Activated T-helper 2 cell treated with anti-CD3 and anti-CD28 coated beads, Interferon-gamma antibody, Interleukin-2, Interleukin-4, amounts not matched to agents 10 μg/mL and 5 μg/mL and 100 μg/mL, durations not matched to agents 14 hours and 24 hours and 36 hours (primary cell): ENCODE measurements at regions of chr12 and their contacts with region 1.

Region 1: DNA sequence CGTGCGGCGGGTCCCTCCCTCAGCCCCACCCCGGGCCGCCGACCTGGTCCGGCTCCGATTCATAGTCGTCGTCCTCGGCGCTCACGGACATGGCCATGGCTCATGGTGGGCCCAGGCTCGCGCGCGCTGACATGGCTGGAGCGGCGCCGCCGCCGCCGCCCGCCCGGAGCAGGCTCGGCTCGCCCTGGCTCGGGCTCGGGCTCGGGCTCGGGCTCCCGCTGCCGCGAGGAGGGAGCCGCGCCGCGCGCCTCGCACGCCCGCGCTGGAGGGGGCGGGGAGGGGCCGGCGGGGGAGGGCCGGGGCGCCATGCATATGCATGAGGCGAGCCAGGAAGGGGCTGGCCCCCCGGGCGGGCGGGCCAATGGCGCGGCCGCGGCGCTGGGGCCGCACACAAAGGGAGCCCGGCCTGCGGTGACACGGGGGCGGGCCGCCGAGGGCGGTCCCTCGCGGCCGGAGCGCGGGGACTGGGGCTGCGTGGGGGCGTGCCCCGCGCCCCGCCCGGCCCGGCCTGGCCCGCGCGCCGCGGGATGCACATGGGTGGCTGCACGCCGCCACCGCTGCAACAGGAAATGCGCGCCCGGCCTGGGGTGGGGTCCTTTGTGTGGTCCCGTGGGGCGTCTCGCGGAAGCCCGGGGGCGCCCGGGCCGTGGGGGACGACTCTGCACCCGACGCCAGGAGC is 67.3 kb downstream of the RNF34 start:
- DNase-seq: peak; percentile 87
- H3K4me3 Mint-ChIP-seq: peak overlapping the region; percentile 17
- H3K27ac Mint-ChIP-seq: no peak overlapping the region
- H3K4me1 Mint-ChIP-seq: peaks cover 17% of the 10 kb centered on the region
- H3K27me3 Mint-ChIP-seq: no peaks in the 10 kb centered on the region

Region 2: DNA sequence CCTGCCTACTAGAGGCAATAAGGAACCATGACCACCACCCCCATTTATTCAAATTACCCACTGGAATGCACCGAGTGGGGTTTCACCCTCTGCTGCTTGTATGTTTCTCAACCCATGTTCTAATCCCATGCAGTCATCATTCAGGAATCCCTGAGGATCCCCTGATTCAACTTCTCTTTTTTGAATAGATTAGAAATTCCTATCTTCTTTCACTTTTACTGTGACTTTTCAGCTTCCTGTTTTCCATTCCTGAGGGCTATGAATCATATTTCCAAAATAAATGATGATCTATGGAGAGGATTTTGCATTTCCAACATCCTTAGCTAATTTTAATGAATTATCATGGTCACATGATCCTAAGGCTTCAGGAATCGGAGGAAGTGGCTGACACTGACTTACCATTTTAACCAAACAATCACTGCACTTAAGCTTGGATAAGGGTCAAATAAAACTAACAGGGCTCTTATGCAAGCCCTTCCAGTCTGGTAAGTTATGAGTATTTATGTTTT is 276.7 kb before region 1 on chr12:
- intact Hi-C with region 1: no loop called
- DNase-seq: no peak
- H3K4me3 Mint-ChIP-seq: no peak overlapping the region
- H3K27ac Mint-ChIP-seq: no peak overlapping the region
- H3K4me1 Mint-ChIP-seq: peaks cover 9% of the 10 kb centered on the region
- H3K27me3 Mint-ChIP-seq: no peaks in the 10 kb centered on the region

Region 3: DNA sequence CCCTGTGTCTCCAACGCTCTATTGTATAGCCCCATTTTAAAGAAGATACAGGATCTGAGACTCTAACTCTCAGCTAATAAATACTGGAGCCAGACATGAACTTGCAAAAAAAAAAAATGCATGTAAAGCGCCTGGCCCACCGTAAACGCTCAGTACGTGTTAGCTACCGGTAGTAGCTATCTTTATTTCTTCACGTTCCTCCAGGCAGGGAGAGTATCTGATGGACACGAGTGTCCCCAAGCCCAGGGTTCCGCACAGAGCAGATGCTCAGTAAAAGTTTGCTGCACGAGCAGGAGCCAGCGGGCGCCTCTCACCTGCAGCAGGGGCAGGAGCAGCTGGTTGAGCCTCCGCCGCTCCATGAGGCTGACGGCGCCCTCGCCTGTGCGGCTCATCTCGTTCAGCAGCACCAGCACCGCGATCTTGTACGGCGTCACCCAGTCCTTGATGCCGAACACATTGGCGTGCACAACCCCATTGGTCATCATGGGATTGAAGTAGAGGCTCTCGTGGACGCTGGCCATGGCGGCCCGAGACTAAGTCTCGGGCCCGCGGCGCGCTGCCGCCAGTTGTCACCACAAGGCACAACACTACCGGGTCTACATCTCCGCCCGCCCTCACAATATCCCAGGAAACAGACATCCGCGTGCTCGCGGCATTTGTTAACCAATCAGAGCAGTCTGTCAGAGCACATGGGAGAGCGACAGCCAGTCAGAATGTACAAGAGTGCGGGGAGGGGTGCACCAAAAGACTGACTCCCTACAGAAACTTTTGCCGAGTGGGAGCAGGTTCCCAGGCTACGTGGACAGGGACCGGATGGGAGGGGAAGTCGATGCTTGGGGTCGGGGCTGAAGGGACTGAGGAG is 115.2 kb before region 1 on chr12 and contains the start of gene ANAPC5:
- intact Hi-C with region 1: loop called (anchors 1 kb)
- DNase-seq: peak; percentile 92
- H3K4me3 Mint-ChIP-seq: peak within 1 kb of the TSS; percentile 95
- H3K27ac Mint-ChIP-seq: peak within 1 kb of the TSS; percentile 97
- H3K4me1 Mint-ChIP-seq: peaks cover 20% of the 10 kb centered on the region
- H3K27me3 Mint-ChIP-seq: peaks cover under 1% of the 10 kb centered on the region
- total RNA-seq, gene ANAPC5: 132 and 135 TPM in 2 replicates

Region 4: GRCh38 chr12:121399391-121400331 is 67.6 kb before region 1 on chr12 and contains the start of gene RNF34:
- intact Hi-C with region 1: loop called (anchors 2 kb)
- DNase-seq: peak; percentile 99
- H3K4me3 Mint-ChIP-seq: peak within 1 kb of the TSS; percentile 97
- H3K27ac Mint-ChIP-seq: peak within 1 kb of the TSS; percentile 96
- H3K4me1 Mint-ChIP-seq: peaks cover 31% of the 10 kb centered on the region
- H3K27me3 Mint-ChIP-seq: no peaks in the 10 kb centered on the region
- total RNA-seq, gene RNF34: 74.1 and 78.3 TPM in 2 replicates

Region 5: GRCh38 chr12:121802846-121803630 is 335.8 kb after region 1 on chr12:
- intact Hi-C with region 1: loop called (anchors 10 kb)
- DNase-seq: peak; percentile 90
- H3K4me3 Mint-ChIP-seq: peak overlapping the region; percentile 87
- H3K27ac Mint-ChIP-seq: peak overlapping the region; percentile 99
- H3K4me1 Mint-ChIP-seq: peaks cover 29% of the 10 kb centered on the region
- H3K27me3 Mint-ChIP-seq: no peaks in the 10 kb centered on the region